H1 (cell line): ENCODE measurements at regions of chr14 and their contacts with region 1.

Region 1: DNA sequence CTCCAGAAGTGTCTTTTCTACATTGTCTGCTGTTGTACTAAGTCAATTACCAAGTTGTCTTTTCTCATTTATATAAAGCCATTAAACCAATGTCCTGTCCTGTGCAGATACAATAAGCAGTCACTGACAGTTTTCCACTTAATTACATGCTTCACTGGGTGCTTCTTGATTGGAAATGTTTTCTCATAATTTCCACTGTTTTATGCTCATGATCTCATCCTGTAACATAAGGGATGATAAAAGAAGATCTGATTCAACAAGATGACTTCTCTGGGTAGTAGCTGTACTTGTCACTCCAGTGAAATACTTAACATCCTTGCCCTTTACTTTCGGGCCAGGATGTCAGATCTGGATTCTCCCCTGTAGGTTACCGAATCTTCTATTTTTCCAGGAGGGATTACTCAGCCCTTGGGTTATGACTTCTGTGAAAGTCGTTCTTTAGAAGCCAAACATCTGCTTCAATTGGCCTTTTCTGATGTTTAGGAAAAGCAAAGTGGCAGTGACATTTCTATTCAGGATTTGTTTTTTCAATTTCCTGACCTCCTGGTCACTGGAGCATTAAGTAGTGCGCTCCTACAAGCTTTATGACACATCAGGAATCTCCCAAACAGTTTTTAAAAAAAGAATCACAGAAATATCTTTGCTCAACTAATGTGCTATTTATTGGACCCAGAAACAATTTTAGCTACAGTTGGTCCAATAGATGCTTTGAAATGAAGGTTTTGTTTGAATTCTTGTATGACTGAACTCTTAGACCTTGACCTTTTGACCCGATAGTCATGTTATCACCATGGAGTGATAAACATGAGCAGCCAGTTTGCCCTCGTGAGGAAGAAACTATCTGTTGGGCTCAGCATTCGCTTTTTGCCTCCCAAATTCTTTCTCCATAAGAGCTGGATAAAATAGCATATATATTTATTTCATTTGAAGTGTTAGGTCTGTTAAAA is 234.5 kb upstream of the SSTR1 start:
- DNase-seq: no peak
- H3K4me3 ChIP-seq: no peak overlapping the region
- H3K27ac ChIP-seq: no peak overlapping the region
- H3K4me1 ChIP-seq: 0 out of 7 replicates have a peak, but pooled peaks cover 0 to 4% (median 0%) of the 10 kb centered on the region in 4 experiments
- H3K27me3 ChIP-seq: no peaks in the 10 kb centered on the region
- CTCF ChIP-seq: no peak
- EP300 ChIP-seq: no peak
- POLR2A ChIP-seq: no peak
- RAD21 ChIP-seq: no peak

Region 2: GRCh38 chr14:37985826-37986470 is 12.7 kb after region 1 on chr14:
- CTCF ChIA-PET with region 1: interaction called, 15 read pairs
- POLR2A ChIA-PET with region 1: no interaction called
- DNase-seq: no peak
- H3K4me3 ChIP-seq: no peak overlapping the region
- H3K27ac ChIP-seq: no peak overlapping the region
- H3K4me1 ChIP-seq: peaks cover 0 to 5% (median 0%) of the 10 kb centered on the region in 4 experiments; a peak in 1 of 7 replicates
- H3K27me3 ChIP-seq: no peaks in the 10 kb centered on the region
- CTCF ChIP-seq: peak in 2 of 3 experiments; percentile 53 to 86; a peak in 3 of 4 replicates
- EP300 ChIP-seq: no peak
- POLR2A ChIP-seq: no peak
- RAD21 ChIP-seq: peak; percentile 70 to 75

Region 3: DNA sequence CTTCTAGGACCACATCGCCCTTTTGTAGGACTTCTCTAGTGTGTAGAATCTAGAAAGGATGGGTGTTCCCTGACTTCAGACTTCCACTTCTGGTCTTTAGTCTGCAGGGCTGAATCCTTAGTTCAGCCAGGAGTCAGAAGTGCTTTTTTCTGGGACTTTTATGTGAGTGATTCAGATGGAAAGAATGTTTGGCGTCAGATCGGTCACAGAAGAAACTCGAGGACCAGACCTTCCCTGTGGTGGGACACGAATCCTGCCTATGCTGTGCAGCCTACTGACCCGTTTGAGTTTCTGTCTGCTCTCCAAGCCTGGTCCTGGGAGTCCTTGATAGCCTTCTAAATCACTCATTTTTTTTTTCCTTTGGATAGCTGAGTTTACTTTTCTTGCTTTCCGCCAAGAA is 69.1 kb after region 1 on chr14:
- CTCF ChIA-PET with region 1: no interaction called
- POLR2A ChIA-PET with region 1: no interaction called
- DNase-seq: peak in 1 of 2 experiments; percentile 19
- H3K4me3 ChIP-seq: no peak overlapping the region
- H3K27ac ChIP-seq: no peak overlapping the region
- H3K4me1 ChIP-seq: peaks cover 0 to 4% (median 1%) of the 10 kb centered on the region in 4 experiments; a peak in 2 of 7 replicates
- H3K27me3 ChIP-seq: no peaks in the 10 kb centered on the region
- CTCF ChIP-seq: no peak
- EP300 ChIP-seq: no peak
- POLR2A ChIP-seq: no peak
- RAD21 ChIP-seq: no peak

Region 4: GRCh38 chr14:38079268-38079667 is 106.1 kb after region 1 on chr14:
- CTCF ChIA-PET with region 1: no interaction called
- POLR2A ChIA-PET with region 1: no interaction called
- DNase-seq: no peak
- H3K4me3 ChIP-seq: no peak overlapping the region
- H3K27ac ChIP-seq: no peak overlapping the region
- H3K4me1 ChIP-seq: peaks cover 0 to 10% (median 3%) of the 10 kb centered on the region in 4 experiments; a peak in 3 of 7 replicates
- H3K27me3 ChIP-seq: no peaks in the 10 kb centered on the region
- CTCF ChIP-seq: no peak
- EP300 ChIP-seq: no peak
- POLR2A ChIP-seq: no peak
- RAD21 ChIP-seq: no peak